Activated naive CD4-positive, alpha-beta T cell treated with anti-CD3 and anti-CD28 coated beads for 36 hours (primary cell): ENCODE measurements at regions of chr4 and their contacts with region 1.

Region 1: DNA sequence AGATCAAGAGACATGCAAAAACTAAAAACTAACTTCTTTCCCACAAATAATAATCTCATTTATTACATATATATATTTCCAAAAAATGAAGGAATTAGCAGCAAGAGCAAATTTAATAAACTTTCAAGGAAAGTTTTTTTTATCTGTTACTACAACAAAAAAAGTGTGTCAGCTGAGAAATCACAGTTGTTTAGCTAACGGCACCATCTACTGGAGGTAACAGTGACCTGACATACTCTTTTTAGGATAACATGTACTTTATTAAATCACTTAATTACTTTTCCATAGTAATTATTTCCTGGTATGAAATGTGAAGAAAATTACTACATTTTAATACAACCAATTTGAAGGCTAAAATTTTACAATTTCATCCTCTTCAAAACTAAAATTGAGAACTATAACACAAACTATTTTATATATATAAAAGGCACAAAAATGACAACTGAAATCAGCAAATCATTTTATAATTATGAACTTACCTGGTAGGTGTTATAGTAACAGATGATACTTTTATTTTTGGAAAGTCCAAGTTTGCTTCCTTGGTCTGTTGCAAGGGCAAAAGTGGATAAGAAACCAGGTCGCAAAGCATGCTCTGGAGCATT is 9.1 kb downstream of the LAMTOR3 start:
- DNase-seq: peak; percentile 57
- H3K4me3 Mint-ChIP-seq: no peak overlapping the region
- H3K27ac Mint-ChIP-seq: no peak overlapping the region
- H3K4me1 Mint-ChIP-seq: peaks cover 6% of the 10 kb centered on the region
- H3K27me3 Mint-ChIP-seq: no peaks in the 10 kb centered on the region

Region 2: GRCh38 chr4:99723612-99724011 is 161.6 kb before region 1 on chr4:
- CTCF ChIA-PET with region 1: interaction called, 3 read pairs
- intact Hi-C with region 1: loop called (anchors 5 kb)
- DNase-seq: peak; percentile 25
- H3K4me3 Mint-ChIP-seq: no peak overlapping the region
- H3K27ac Mint-ChIP-seq: no peak overlapping the region
- H3K4me1 Mint-ChIP-seq: no peaks in the 10 kb centered on the region
- H3K27me3 Mint-ChIP-seq: peaks cover 2% of the 10 kb centered on the region

Region 3: DNA sequence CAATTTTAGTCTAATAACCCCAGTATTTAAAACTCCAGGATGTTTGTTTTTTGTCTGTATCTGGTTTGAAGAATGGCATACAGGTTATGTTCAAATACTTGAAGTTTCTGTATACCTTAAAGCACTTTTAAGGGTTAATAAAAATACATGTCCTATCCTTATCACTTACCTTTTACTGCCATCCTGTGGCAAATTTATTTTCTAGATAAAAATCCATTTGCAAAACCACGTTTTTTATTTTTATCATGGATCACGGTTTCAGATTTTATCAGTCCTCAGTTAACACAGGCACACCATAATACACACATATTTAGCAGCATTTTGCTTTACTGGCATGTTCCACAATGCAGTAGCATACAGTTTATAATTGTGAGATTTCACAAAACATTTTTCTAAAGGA is 178.2 kb after region 1 on chr4:
- CTCF ChIA-PET with region 1: no interaction called
- intact Hi-C with region 1: loop called (anchors 2 kb)
- DNase-seq: no peak
- H3K4me3 Mint-ChIP-seq: no peak overlapping the region
- H3K27ac Mint-ChIP-seq: no peak overlapping the region
- H3K4me1 Mint-ChIP-seq: no peaks in the 10 kb centered on the region
- H3K27me3 Mint-ChIP-seq: peaks cover 20% of the 10 kb centered on the region